ENCODE measurements at regions of chr21 and their contacts with region 1.

Region 1: DNA sequence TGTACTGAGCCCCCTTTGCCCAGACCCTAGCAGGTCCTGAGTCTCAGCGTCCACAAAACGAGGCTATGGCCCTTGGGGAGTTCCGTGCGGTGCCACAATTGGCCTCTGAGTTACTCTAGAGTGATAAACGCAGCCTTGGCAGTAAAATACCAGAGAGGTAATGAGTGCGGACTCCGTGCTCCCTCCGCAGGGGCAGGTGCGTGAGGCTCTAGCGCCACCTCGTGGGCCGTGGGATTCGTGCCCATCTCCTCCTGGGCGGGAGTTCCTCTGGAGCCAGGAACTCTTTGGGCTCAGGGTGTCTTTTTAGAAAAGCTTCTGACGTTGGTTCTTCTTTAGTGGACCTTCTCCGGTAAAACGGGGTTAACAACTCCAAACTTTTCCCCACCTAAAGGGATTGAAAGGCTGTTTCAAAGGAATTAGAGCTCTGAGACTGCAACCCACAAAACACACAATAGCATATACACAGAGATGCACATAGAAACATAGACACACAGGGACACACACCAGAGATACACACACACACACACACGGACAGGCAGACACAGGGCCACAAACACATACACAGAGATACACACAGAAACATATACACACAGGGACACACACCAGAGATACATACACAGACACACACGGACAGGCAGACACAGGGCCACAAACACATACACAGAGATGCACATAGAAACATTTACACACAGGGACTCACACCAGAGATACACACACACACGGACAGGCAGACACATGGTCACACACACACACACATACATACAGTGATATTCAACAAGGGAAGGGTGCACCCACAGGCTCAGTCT is 99.4 kb downstream of the KCNJ15 start:
- DNase-seq: peak; percentile 42
- H3K4me3 ChIP-seq: no peak overlapping the region
- H3K27ac ChIP-seq: no peak overlapping the region
- H3K4me1 ChIP-seq: no peaks in the 10 kb centered on the region
- CTCF ChIP-seq: peak; percentile 91

Region 2: DNA sequence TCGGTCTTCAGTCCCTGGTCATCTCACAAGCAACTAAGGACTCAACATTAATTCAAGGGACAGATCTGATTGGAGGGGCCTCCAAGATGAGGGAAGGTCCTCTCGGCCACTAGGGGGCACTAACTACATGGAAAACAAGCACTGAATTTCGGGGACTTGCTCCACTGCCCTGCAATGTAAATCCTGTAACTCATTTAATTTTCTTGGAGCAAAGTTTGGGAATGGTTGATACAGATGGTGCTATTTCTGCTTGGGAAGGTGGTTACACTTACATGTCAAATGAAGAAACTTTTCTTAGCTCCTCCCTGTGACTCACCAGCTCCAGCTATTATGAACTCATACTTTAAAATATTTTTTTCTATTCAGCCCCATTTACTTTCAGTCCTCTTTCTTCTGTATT is 196.8 kb before region 1 on chr21:
- CTCF ChIA-PET with region 1: no interaction called
- POLR2A ChIA-PET with region 1: no interaction called
- intact Hi-C with region 1: loop called (anchors 5 kb)
- DNase-seq: peak; percentile 63
- H3K4me3 ChIP-seq: no peak overlapping the region
- H3K27ac ChIP-seq: no peak overlapping the region
- H3K4me1 ChIP-seq: no peaks in the 10 kb centered on the region
- CTCF ChIP-seq: peak; percentile 93

Region 3: GRCh38 chr21:38219049-38219628 is 137.1 kb before region 1 on chr21:
- CTCF ChIA-PET with region 1: no interaction called
- POLR2A ChIA-PET with region 1: no interaction called
- intact Hi-C with region 1: loop called (anchors 2 kb)
- DNase-seq: peak; percentile 53
- H3K4me3 ChIP-seq: no peak overlapping the region
- H3K27ac ChIP-seq: no peak overlapping the region
- H3K4me1 ChIP-seq: no peaks in the 10 kb centered on the region
- CTCF ChIP-seq: peak; percentile 96

Measured in OCI-LY7 (cell line).